ENCODE measurements at regions of chr1 and their contacts with region 1.

Region 1: DNA sequence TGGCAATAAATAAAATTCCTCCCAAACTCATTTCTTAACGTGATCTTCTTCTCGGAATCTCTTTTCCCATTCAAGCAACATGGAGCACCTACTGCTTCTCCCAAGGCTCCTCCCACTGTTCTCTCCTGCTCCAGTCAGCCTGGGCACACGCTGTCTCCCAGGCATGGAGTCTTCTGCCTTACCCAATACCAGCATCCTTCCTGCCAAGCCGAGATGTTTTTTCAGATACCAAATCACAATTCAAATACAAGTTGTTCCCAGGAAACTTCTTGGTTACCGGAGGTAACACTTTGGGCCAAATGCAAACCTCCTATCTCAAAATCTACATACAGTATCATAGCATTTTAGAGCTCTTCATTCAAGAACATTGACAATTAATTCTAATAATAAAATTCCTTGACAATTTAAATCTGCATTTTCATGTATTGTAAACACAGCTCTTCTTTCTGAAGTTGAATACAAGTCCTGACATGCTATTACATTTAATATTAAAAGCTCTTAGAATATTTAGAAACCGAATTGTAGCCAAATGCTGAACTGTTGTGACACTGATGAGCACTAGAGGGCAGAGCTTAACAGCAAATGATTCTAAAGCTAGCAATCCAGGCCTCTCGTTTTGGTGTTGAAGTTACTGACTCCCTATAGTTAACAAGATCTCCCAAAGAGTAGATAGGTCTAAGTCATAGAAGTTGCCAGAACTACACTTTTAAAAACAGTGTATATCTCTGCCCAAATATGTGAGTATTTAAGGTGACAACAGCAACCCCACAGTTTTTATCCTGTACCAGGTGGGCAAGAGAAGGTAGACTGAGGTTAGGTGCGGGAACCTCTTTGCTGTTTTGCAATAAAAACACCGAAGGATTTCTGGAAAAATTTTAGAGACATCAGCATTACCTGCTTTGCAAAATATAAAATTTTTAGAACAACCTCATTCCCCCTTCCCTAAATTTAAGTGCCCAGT is 52.3 kb downstream of the BCAR3 start:
- DNase-seq: peak in 4 of 5 donors; percentile 62 to 69 (median 63)
- H3K4me3 ChIP-seq: no peak overlapping the region
- H3K4me3 Mint-ChIP-seq: no peak overlapping the region
- H3K27ac ChIP-seq: no peak overlapping the region
- H3K27ac Mint-ChIP-seq: peak overlapping the region in 2 of 7 donors; percentile 46 to 55
- H3K4me1 ChIP-seq: no peaks in the 10 kb centered on the region
- H3K4me1 Mint-ChIP-seq: no peaks in the 10 kb centered on the region
- H3K27me3 ChIP-seq: no peaks in the 10 kb centered on the region
- H3K27me3 Mint-ChIP-seq: no peaks in the 10 kb centered on the region

Region 2: GRCh38 chr1:93437976-93438605 is 191.3 kb before region 1 on chr1:
- CTCF ChIA-PET with region 1: interaction called, 14 read pairs
- POLR2A ChIA-PET with region 1: no interaction called
- intact Hi-C with region 1: loop called (anchors 1 kb)
- DNase-seq: peak in 4 of 5 donors; percentile 33 to 44 (median 40)
- H3K4me3 ChIP-seq: no peak overlapping the region
- H3K4me3 Mint-ChIP-seq: peak overlapping the region in 1 of 8 donors; percentile 15
- H3K27ac ChIP-seq: no peak overlapping the region
- H3K27ac Mint-ChIP-seq: no peak overlapping the region
- H3K4me1 ChIP-seq: no peaks in the 10 kb centered on the region
- H3K4me1 Mint-ChIP-seq: peaks cover 0 to 7% (median 3%) of the 10 kb centered on the region in 4 donors
- H3K27me3 ChIP-seq: no peaks in the 10 kb centered on the region
- H3K27me3 Mint-ChIP-seq: peaks cover 4 to 7% of the 10 kb centered on the region in 2 donors

Region 3: DNA sequence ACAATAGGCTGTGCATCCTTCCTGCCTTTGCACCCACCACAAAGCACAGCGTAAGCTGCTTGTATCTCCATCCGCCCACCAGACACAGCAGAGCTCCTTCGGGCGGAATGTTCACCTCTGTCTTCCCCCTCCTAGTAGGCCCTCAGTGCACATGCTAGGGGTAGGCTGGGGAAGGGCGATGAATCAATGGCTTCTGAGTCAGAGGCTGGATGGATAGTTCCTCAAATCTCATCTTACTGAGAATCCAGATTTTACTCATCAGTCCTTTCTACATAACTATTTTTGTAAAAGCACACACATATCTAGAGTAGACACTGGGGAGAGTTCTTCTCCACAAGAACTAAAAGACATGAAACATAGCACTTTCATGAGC is 21.6 kb before region 1 on chr1:
- CTCF ChIA-PET with region 1: interaction called, 11 read pairs
- POLR2A ChIA-PET with region 1: no interaction called
- intact Hi-C with region 1: no loop called
- DNase-seq: no peak
- H3K4me3 ChIP-seq: no peak overlapping the region
- H3K4me3 Mint-ChIP-seq: no peak overlapping the region
- H3K27ac ChIP-seq: no peak overlapping the region
- H3K27ac Mint-ChIP-seq: no peak overlapping the region
- H3K4me1 ChIP-seq: no peaks in the 10 kb centered on the region
- H3K4me1 Mint-ChIP-seq: peaks cover 0 to 5% (median under 1%) of the 10 kb centered on the region in 4 donors
- H3K27me3 ChIP-seq: no peaks in the 10 kb centered on the region
- H3K27me3 Mint-ChIP-seq: peaks cover 0 to 5% of the 10 kb centered on the region in 2 donors

Region 4: GRCh38 chr1:93814059-93814794 is 184.8 kb after region 1 on chr1:
- CTCF ChIA-PET with region 1: interaction called, 135 read pairs
- POLR2A ChIA-PET with region 1: no interaction called
- intact Hi-C with region 1: loop called (anchors 1 kb)
- DNase-seq: peak in 4 of 5 donors; percentile 33 to 51 (median 38)
- H3K4me3 ChIP-seq: no peak overlapping the region
- H3K4me3 Mint-ChIP-seq: no peak overlapping the region
- H3K27ac ChIP-seq: no peak overlapping the region
- H3K27ac Mint-ChIP-seq: no peak overlapping the region
- H3K4me1 ChIP-seq: peaks cover 20% of the 10 kb centered on the region
- H3K4me1 Mint-ChIP-seq: peaks cover 13 to 23% (median 17%) of the 10 kb centered on the region in 4 donors
- H3K27me3 ChIP-seq: no peaks in the 10 kb centered on the region
- H3K27me3 Mint-ChIP-seq: no peaks in the 10 kb centered on the region

Region 5: DNA sequence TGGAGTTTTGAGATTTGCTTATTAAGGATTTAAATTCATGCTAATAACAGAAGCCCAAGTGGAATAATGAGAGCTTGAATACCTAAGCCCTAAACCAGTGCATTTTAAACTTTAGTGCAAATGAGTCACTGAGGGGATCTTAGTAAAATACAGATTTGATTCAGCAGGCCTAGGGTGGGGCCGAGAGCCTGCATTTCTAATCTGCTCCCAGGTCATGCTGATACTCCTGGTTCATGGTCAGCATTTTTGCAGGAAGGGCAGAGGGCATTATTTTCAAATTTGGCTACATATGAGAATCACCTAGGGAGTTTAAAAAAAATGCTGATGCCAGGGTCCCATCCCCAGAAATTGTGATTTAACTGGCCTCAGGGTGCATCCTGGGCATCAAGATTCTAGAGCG is 210.4 kb after region 1 on chr1:
- CTCF ChIA-PET with region 1: interaction called, 191 read pairs
- POLR2A ChIA-PET with region 1: interaction called, 15 read pairs
- intact Hi-C with region 1: loop called (anchors 1 kb)
- DNase-seq: no peak
- H3K4me3 ChIP-seq: no peak overlapping the region
- H3K4me3 Mint-ChIP-seq: no peak overlapping the region
- H3K27ac ChIP-seq: no peak overlapping the region
- H3K27ac Mint-ChIP-seq: no peak overlapping the region
- H3K4me1 ChIP-seq: peaks cover 11% of the 10 kb centered on the region
- H3K4me1 Mint-ChIP-seq: peaks cover 4 to 7% (median 5%) of the 10 kb centered on the region in 4 donors
- H3K27me3 ChIP-seq: no peaks in the 10 kb centered on the region
- H3K27me3 Mint-ChIP-seq: no peaks in the 10 kb centered on the region

Region 6: DNA sequence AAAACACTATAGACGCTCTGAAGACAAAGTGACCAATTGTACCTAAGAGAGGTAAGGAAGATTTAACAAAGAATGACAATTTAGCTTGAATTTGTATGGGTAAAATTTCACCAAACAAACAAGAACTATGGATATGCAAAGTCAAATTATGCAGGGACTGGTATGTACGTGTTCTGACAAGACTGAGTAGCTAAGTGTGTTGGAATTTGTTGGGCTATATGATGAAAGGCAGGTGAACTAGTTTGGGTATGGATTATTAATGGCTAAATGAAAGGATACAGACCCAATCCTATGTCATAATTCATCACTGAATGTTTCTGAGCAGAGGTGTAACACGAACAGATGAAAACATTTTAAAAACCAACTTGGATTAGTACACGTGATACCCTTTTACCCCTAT is 242.0 kb after region 1 on chr1:
- CTCF ChIA-PET with region 1: interaction called, 20 read pairs
- POLR2A ChIA-PET with region 1: no interaction called
- intact Hi-C with region 1: loop called (anchors 1 kb)
- DNase-seq: no peak
- H3K4me3 ChIP-seq: no peak overlapping the region
- H3K4me3 Mint-ChIP-seq: no peak overlapping the region
- H3K27ac ChIP-seq: no peak overlapping the region
- H3K27ac Mint-ChIP-seq: peak overlapping the region in 1 of 7 donors; percentile 79
- H3K4me1 ChIP-seq: peaks cover 9% of the 10 kb centered on the region
- H3K4me1 Mint-ChIP-seq: peaks cover 10 to 18% (median 16%) of the 10 kb centered on the region in 4 donors
- H3K27me3 ChIP-seq: no peaks in the 10 kb centered on the region
- H3K27me3 Mint-ChIP-seq: no peaks in the 10 kb centered on the region

Region 7: GRCh38 chr1:93878889-93879586 is 249.7 kb after region 1 on chr1 and contains the start of gene DNTTIP2:
- CTCF ChIA-PET with region 1: interaction called, 10 read pairs
- POLR2A ChIA-PET with region 1: interaction called, 3 read pairs
- intact Hi-C with region 1: loop called (anchors 1 kb)
- DNase-seq: peak; percentile 86 to 89 (median 88)
- H3K4me3 ChIP-seq: peak within 1 kb of the TSS; percentile 88 to 96
- H3K4me3 Mint-ChIP-seq: peak within 1 kb of the TSS; percentile 92 to 100 (median 98)
- H3K27ac ChIP-seq: peak within 1 kb of the TSS; percentile 92
- H3K27ac Mint-ChIP-seq: peak within 1 kb of the TSS; percentile 97 to 100 (median 99)
- H3K4me1 ChIP-seq: peaks cover 38% of the 10 kb centered on the region
- H3K4me1 Mint-ChIP-seq: peaks cover 29 to 54% (median 41%) of the 10 kb centered on the region in 4 donors
- H3K27me3 ChIP-seq: no peaks in the 10 kb centered on the region
- H3K27me3 Mint-ChIP-seq: no peaks in the 10 kb centered on the region
- total RNA-seq, gene DNTTIP2: 71.4 to 75.4 TPM